ENCODE measurements at regions of chr17 and their contacts with region 1.

Region 1: DNA sequence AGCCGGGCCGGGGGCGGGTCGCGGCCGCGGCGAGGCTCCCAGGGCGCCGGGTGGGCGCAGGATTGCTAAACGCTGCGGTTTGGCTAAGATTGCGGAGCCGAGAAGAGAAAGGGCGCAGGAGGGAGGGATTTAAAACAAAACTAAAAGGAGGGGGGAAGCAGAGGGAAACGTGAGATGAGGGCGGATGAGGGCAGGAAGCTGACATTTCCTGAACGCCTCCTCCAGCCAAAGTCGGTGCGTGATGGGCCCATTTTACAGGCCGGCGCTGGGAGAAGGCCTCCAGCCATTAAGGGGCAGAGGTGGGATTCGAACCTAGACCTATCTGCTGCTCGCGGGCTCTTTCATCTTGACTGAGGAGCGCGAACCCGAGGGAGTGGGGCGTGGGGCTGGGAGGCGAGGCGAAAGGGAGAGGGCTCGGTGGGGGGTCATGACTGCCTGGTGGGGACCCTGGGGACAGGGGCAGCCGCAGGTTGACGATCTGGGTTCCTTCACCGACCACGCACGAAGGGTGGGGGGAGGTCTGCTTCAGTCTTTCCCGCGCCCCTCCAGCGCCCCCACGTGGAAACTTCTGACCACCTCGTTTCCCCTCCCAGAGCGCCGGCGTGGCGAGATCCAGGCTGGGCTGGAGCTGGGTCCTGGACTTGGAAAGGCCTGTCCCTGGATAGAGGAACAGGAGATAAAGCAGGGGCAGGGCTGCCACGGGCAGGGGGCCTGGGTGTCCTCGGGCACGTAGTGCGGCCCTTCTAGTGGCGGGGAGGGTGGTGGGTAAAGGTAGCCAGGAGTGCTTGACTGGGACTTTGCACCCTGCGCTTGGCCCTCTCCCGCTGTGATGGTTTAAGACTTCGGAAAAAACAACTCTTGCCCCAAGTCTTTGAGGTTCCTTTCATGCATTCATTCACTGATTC is 3.8 kb upstream of the TAC4 start:
- DNase-seq: peak; percentile 66 to 79 (median 69)
- H3K4me3 ChIP-seq: peak overlapping the region; percentile 60 to 87
- H3K4me3 Mint-ChIP-seq: peak overlapping the region; percentile 88 to 95 (median 92)
- H3K27ac ChIP-seq: peak overlapping the region; percentile 54
- H3K27ac Mint-ChIP-seq: peak overlapping the region; percentile 89 to 98 (median 95)
- H3K4me1 ChIP-seq: peaks cover 16% of the 10 kb centered on the region
- H3K4me1 Mint-ChIP-seq: peaks cover 12 to 31% (median 20%) of the 10 kb centered on the region in 4 donors
- H3K27me3 ChIP-seq: no peaks in the 10 kb centered on the region
- H3K27me3 Mint-ChIP-seq: peaks cover 0 to 2% of the 10 kb centered on the region in 2 donors

Region 2: DNA sequence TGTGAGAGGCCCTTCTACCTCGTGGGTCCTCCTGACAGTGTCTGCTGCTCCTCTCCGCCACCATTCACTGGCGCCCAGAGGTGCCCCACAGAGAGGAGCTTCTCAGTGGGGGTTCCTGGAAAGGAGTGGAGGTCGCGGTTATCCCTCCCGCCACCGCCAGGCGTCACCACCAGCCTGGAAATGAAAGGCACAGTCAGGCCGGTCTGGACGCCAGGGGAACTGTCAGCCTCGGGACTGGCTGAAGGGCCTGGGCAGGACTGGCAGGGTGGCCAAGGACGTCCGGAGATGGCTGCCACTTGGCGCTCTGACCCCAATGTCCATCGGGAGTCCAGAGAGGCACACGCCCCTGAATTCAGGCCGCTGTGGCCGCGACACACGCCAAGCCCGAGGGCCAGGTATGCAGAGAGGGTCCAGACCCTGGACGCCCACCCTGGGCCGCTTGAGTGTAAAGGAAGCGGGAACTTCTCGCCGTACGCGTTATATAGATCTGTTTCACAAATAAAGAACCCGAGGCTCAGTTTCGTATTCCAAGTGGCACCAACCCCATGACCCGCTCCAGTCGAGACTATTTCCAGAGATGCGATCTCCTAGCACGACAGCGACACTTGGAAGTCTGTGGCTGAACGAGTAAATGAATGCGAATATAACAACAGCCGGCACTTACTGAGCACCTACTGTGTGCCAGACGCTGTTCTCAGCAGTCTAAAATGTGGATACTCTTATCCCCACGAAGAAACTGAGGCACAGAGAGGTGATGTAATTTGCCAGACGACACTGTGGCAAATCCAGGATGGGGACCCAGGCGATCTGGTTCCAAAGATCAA is 283.6 kb before region 1 on chr17:
- CTCF ChIA-PET with region 1: interaction called, 6 read pairs
- POLR2A ChIA-PET with region 1: interaction called, 4 read pairs
- intact Hi-C with region 1: loop called (anchors 1 kb)
- DNase-seq: peak; percentile 68 to 77 (median 74)
- H3K4me3 ChIP-seq: peak overlapping the region in 1 of 2 donors; percentile 56
- H3K4me3 Mint-ChIP-seq: peak overlapping the region; percentile 28 to 82 (median 60)
- H3K27ac ChIP-seq: no peak overlapping the region
- H3K27ac Mint-ChIP-seq: peak overlapping the region in 2 of 7 donors; percentile 46 to 54
- H3K4me1 ChIP-seq: peaks cover 10% of the 10 kb centered on the region
- H3K4me1 Mint-ChIP-seq: peaks cover 8 to 29% (median 19%) of the 10 kb centered on the region in 4 donors
- H3K27me3 ChIP-seq: no peaks in the 10 kb centered on the region
- H3K27me3 Mint-ChIP-seq: peaks cover 6 to 11% of the 10 kb centered on the region in 2 donors

Region 3: GRCh38 chr17:49646391-49647255 is 205.0 kb before region 1 on chr17:
- CTCF ChIA-PET with region 1: no interaction called
- POLR2A ChIA-PET with region 1: no interaction called
- intact Hi-C with region 1: no loop called
- DNase-seq: no peak
- H3K4me3 ChIP-seq: no peak overlapping the region
- H3K4me3 Mint-ChIP-seq: peak overlapping the region in 4 of 8 donors; percentile 20 to 50 (median 33)
- H3K27ac ChIP-seq: no peak overlapping the region
- H3K27ac Mint-ChIP-seq: peak overlapping the region in 3 of 7 donors; percentile 25 to 60 (median 41)
- H3K4me1 ChIP-seq: peaks cover 31% of the 10 kb centered on the region
- H3K4me1 Mint-ChIP-seq: peaks cover 30 to 60% (median 42%) of the 10 kb centered on the region in 4 donors
- H3K27me3 ChIP-seq: no peaks in the 10 kb centered on the region
- H3K27me3 Mint-ChIP-seq: no peaks in the 10 kb centered on the region

Region 4: GRCh38 chr17:49815761-49816281 is 35.8 kb before region 1 on chr17:
- CTCF ChIA-PET with region 1: interaction called, 3 read pairs
- POLR2A ChIA-PET with region 1: interaction called, 12 read pairs
- intact Hi-C with region 1: loop called (anchors 5 kb)
- DNase-seq: no peak
- H3K4me3 ChIP-seq: no peak overlapping the region
- H3K4me3 Mint-ChIP-seq: peak overlapping the region in 1 of 8 donors; percentile 13
- H3K27ac ChIP-seq: no peak overlapping the region
- H3K27ac Mint-ChIP-seq: peak overlapping the region; percentile 48 to 99 (median 70)
- H3K4me1 ChIP-seq: peaks cover 63% of the 10 kb centered on the region
- H3K4me1 Mint-ChIP-seq: peaks cover 41 to 76% (median 61%) of the 10 kb centered on the region in 4 donors
- H3K27me3 ChIP-seq: no peaks in the 10 kb centered on the region
- H3K27me3 Mint-ChIP-seq: no peaks in the 10 kb centered on the region

Region 5: DNA sequence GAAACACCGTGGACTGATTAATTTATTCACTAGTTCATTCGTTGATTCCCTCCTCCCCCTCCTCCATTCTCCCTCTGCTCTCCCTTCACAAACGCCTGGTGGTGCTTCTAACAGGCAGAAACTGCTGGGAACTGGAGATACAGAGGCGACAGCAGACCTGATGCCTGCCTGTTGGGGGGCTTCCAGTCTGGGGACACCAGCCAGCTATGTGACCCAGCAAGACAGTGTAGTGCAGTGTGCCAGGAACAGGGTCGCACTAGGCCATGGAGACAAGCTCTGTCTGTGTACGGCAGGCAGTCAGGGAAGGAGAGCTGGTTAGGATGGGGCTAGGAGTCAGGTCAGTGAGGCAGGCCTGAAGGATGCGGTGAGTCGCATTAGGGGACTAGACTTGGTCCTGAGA is 11.6 kb before region 1 on chr17:
- CTCF ChIA-PET with region 1: interaction called, 4 read pairs
- POLR2A ChIA-PET with region 1: interaction called, 11 read pairs
- intact Hi-C with region 1: no loop called
- DNase-seq: no peak
- H3K4me3 ChIP-seq: no peak overlapping the region
- H3K4me3 Mint-ChIP-seq: no peak overlapping the region
- H3K27ac ChIP-seq: no peak overlapping the region
- H3K27ac Mint-ChIP-seq: peak overlapping the region in 2 of 7 donors; percentile 62 to 83
- H3K4me1 ChIP-seq: peaks cover 4% of the 10 kb centered on the region
- H3K4me1 Mint-ChIP-seq: peaks cover 2 to 33% (median 21%) of the 10 kb centered on the region in 4 donors
- H3K27me3 ChIP-seq: no peaks in the 10 kb centered on the region
- H3K27me3 Mint-ChIP-seq: no peaks in the 10 kb centered on the region

Measured in CD4-positive, alpha-beta memory T cell (primary cell).